Activated CD8-positive, alpha-beta memory T cell treated with anti-CD3 and anti-CD28 coated beads, Interleukin-2, amount 10 ng/mL, durations not matched to agents 7 days and 5 days (primary cell): ENCODE measurements at regions of chr15 and their contacts with region 1.

Region 1: GRCh38 chr15:84600851-84601838 is at the start of gene ZSCAN2:
- DNase-seq: peak; percentile 98
- ATAC-seq: peak; percentile 96
- H3K4me3 Mint-ChIP-seq: peak within 1 kb of the TSS; percentile 92
- H3K27ac Mint-ChIP-seq: peak within 1 kb of the TSS; percentile 72
- H3K4me1 Mint-ChIP-seq: peaks cover 76% of the 10 kb centered on the region
- H3K27me3 Mint-ChIP-seq: no peaks in the 10 kb centered on the region
- total RNA-seq, gene ZSCAN2: 8.6 to 12.9 TPM

Region 2: DNA sequence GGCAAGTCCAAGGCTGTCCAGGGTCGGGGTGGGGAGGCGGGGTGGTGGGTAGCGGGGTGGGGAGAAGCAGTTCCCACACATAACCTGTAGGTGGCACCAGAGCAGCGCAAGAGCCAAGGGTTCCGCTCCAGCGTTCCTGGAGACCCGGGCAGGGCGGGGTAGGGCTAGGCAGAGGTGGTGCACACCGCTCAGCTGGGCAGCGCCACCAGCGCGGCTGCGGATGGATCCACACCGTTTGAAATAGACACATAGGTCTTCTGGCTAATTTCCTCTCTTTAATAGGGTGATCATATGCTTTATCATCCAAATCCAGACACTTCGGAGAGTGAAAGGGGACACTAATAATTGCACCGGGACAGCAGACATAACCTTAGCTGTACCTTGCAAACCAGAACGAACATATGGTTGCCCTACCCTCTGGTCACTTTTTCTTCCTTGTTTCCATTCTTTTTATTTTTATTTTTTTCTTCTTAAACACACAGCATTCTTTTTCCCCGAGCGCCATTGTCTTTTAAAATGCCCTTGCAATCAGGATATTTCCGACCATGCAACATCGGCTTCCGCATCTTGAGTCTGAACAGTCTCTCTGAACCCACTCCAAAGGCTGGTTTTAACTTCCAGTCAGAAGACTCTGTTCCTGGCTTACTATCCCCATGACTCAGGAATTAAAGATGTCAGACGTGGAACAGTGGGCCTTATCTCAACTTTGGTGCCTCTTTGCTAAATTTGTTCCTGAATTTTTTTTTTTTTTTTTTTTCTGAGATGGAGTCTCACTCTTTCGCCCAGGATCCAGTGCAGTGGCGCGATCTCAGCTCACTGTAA is 12.9 kb before region 1 on chr15:
- CTCF ChIA-PET with region 1: interaction called, 28 read pairs
- DNase-seq: peak; percentile 91
- ATAC-seq: peak; percentile 100
- H3K4me3 Mint-ChIP-seq: peak overlapping the region; percentile 57
- H3K27ac Mint-ChIP-seq: no peak overlapping the region
- H3K4me1 Mint-ChIP-seq: peaks cover 2% of the 10 kb centered on the region
- H3K27me3 Mint-ChIP-seq: peaks cover 16% of the 10 kb centered on the region

Region 3: DNA sequence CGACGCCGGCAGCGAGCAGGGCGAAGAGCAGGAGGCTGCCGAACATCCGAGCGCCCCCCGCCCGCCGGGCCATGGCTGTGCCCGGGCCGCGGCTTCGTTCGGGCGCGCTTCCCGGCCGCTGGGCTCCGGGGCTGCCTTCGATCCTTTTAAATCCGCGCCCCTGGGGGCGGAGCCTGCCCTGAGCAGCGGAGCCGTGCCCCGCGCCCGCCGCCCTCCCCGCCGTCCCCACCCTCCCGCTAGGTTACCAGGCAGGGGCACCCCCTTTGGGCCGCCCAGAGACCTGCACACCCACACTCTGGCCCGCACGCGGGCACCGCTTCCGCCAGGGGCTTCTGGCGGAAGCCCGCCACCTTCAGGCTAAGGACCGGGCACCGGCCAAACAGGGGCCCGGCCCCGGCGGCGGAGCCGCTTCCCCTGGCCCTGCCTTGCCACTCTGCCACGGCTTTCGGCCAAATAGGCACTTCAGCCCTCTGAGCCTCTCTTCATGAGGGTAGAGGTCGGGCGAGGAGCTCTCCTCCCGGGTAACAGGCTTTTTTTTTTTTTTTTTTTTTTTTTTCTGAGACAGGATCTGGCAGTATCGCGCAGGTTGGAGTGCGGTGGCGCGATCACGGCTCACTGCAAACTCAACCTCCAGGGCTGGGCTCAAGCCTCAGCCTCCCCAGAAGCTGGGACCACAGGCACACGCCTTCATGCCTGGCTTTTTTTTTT is 57.1 kb after region 1 on chr15 and contains the start of gene NMB:
- CTCF ChIA-PET with region 1: interaction called, 38 read pairs
- DNase-seq: peak; percentile 86
- ATAC-seq: peak; percentile 68
- H3K4me3 Mint-ChIP-seq: peak within 1 kb of the TSS; percentile 65
- H3K27ac Mint-ChIP-seq: peak within 1 kb of the TSS; percentile 61
- H3K4me1 Mint-ChIP-seq: peaks cover 34% of the 10 kb centered on the region
- H3K27me3 Mint-ChIP-seq: no peaks in the 10 kb centered on the region
- total RNA-seq, gene NMB: 1.5 to 1.8 TPM

Region 4: DNA sequence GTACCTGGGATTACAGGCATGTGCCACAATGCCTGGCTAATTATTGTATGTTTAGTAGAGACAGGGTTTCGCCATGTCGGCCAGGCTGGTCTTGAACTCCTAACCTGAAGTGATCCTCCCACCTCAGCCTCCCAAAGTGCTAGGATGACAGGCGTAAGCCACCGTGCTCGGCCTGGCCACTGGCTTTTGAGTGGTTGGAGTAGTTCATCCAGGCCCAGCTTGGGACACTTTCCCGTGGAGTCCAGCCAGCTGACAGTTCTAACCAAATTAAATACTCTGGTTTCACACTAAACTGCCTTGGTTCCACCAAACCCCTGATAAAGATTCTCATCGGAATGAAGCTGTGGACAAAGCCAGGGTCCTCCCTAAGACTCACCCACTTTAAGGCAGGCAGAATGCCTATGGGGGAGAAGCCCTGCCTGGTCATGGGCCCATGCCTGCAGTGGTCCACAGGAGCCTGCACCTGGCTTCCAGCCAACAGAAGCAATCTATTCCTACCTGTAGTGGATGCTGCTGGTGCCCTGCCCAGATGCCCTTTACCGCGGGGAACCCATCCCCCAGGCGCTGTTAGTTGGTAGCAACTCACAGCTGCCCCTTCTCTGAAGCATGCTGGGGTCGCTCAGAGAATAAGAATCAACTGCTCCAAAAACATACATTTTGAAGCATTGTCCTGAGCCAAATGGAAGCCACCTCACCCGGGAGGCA is 278.1 kb after region 1 on chr15:
- CTCF ChIA-PET with region 1: interaction called, 24 read pairs
- DNase-seq: no peak
- ATAC-seq: no peak
- H3K4me3 Mint-ChIP-seq: no peak overlapping the region
- H3K27ac Mint-ChIP-seq: no peak overlapping the region
- H3K4me1 Mint-ChIP-seq: peaks cover 3% of the 10 kb centered on the region
- H3K27me3 Mint-ChIP-seq: peaks cover 7% of the 10 kb centered on the region